Activated CD8-positive, alpha-beta T cell treated with anti-CD3 and anti-CD28 coated beads for 36 hours (primary cell): ENCODE measurements at regions of chr6 and their contacts with region 1.

Region 1: GRCh38 chr6:25490018-25490801 is 161.8 kb upstream of the SCGN start:
- DNase-seq: peak; percentile 81
- ATAC-seq: peak; percentile 96
- H3K4me3 Mint-ChIP-seq: no peak overlapping the region
- H3K27ac Mint-ChIP-seq: no peak overlapping the region
- H3K4me1 Mint-ChIP-seq: peaks cover 7% of the 10 kb centered on the region
- H3K27me3 Mint-ChIP-seq: no peaks in the 10 kb centered on the region
- CTCF ChIP-seq: peak; percentile 86

Region 2: GRCh38 chr6:25223490-25223991 is 266.7 kb before region 1 on chr6:
- CTCF ChIA-PET with region 1: interaction called, 36 read pairs
- POLR2A ChIA-PET with region 1: no interaction called
- intact Hi-C with region 1: no loop called
- DNase-seq: peak; percentile 77
- ATAC-seq: peak; percentile 77
- H3K4me3 Mint-ChIP-seq: peak overlapping the region; percentile 59
- H3K27ac Mint-ChIP-seq: no peak overlapping the region
- H3K4me1 Mint-ChIP-seq: peaks cover 11% of the 10 kb centered on the region
- H3K27me3 Mint-ChIP-seq: peaks cover 6% of the 10 kb centered on the region
- CTCF ChIP-seq: peak; percentile 97

Region 3: DNA sequence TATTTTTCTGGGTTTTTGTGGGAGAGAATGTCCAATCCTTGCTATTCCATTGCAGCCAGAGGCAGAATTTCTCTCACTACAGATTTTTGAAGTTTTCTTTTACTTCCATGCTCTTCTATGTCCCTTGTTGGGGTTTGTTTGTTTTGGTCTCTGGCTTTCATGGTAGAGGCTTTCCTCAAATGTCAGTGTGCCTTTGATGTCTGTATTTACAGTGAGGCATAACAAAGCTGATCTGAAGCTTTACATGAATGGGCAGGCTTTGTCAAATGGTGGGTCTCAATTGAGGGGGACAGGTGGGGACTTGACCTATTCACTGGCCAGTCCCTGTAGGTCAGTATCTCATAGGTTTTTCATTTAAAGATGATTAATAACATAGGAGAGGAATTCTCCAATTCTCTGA is 219.7 kb before region 1 on chr6:
- CTCF ChIA-PET with region 1: interaction called, 123 read pairs
- POLR2A ChIA-PET with region 1: interaction called, 5 read pairs
- intact Hi-C with region 1: loop called (anchors 1 kb)
- DNase-seq: no peak
- ATAC-seq: no peak
- H3K4me3 Mint-ChIP-seq: no peak overlapping the region
- H3K27ac Mint-ChIP-seq: no peak overlapping the region
- H3K4me1 Mint-ChIP-seq: peaks cover under 1% of the 10 kb centered on the region
- H3K27me3 Mint-ChIP-seq: peaks cover under 1% of the 10 kb centered on the region
- CTCF ChIP-seq: no peak

Region 4: GRCh38 chr6:25340431-25341202 is 149.6 kb before region 1 on chr6:
- CTCF ChIA-PET with region 1: interaction called, 10 read pairs
- POLR2A ChIA-PET with region 1: no interaction called
- intact Hi-C with region 1: no loop called
- DNase-seq: no peak
- ATAC-seq: no peak
- H3K4me3 Mint-ChIP-seq: no peak overlapping the region
- H3K27ac Mint-ChIP-seq: no peak overlapping the region
- H3K4me1 Mint-ChIP-seq: peaks cover 9% of the 10 kb centered on the region
- H3K27me3 Mint-ChIP-seq: no peaks in the 10 kb centered on the region
- CTCF ChIP-seq: no peak

Region 5: GRCh38 chr6:25504661-25505060 is 14.5 kb after region 1 on chr6:
- CTCF ChIA-PET with region 1: interaction called, 30 read pairs
- POLR2A ChIA-PET with region 1: interaction called, 3 read pairs
- intact Hi-C with region 1: no loop called
- DNase-seq: no peak
- ATAC-seq: no peak
- H3K4me3 Mint-ChIP-seq: no peak overlapping the region
- H3K27ac Mint-ChIP-seq: no peak overlapping the region
- H3K4me1 Mint-ChIP-seq: no peaks in the 10 kb centered on the region
- H3K27me3 Mint-ChIP-seq: no peaks in the 10 kb centered on the region
- CTCF ChIP-seq: no peak

Region 6: DNA sequence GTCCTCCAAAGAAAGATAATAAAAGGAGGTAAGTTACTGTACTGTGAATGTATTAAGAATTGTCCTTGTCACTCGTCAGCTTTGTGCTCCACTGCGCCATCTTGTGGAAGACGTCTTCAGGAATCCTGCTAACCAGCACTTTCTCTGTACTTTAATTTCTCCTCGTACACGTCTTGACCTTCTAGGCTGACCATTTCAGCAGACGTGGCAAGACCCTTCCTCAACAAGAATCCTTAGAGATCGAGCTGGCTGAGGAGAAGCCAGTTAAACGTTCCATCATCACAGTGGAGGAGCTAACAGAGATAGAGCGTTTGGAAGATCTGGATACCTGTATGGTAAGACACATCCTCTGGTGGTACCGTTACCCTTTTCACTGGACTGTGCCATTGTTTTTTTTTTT is 66.3 kb after region 1 on chr6:
- CTCF ChIA-PET with region 1: interaction called, 18 read pairs
- POLR2A ChIA-PET with region 1: no interaction called
- intact Hi-C with region 1: no loop called
- DNase-seq: peak; percentile 90
- ATAC-seq: peak; percentile 66
- H3K4me3 Mint-ChIP-seq: no peak overlapping the region
- H3K27ac Mint-ChIP-seq: no peak overlapping the region
- H3K4me1 Mint-ChIP-seq: peaks cover 2% of the 10 kb centered on the region
- H3K27me3 Mint-ChIP-seq: no peaks in the 10 kb centered on the region
- CTCF ChIP-seq: peak; percentile 80

Region 7: GRCh38 chr6:25641940-25642666 is 151.9 kb after region 1 on chr6:
- CTCF ChIA-PET with region 1: no interaction called
- POLR2A ChIA-PET with region 1: no interaction called
- intact Hi-C with region 1: no loop called
- DNase-seq: no peak
- ATAC-seq: no peak
- H3K4me3 Mint-ChIP-seq: no peak overlapping the region
- H3K27ac Mint-ChIP-seq: no peak overlapping the region
- H3K4me1 Mint-ChIP-seq: no peaks in the 10 kb centered on the region
- H3K27me3 Mint-ChIP-seq: peaks cover 37% of the 10 kb centered on the region
- CTCF ChIP-seq: no peak